ENCODE measurements at regions of chr15 and their contacts with region 1.

Region 1: DNA sequence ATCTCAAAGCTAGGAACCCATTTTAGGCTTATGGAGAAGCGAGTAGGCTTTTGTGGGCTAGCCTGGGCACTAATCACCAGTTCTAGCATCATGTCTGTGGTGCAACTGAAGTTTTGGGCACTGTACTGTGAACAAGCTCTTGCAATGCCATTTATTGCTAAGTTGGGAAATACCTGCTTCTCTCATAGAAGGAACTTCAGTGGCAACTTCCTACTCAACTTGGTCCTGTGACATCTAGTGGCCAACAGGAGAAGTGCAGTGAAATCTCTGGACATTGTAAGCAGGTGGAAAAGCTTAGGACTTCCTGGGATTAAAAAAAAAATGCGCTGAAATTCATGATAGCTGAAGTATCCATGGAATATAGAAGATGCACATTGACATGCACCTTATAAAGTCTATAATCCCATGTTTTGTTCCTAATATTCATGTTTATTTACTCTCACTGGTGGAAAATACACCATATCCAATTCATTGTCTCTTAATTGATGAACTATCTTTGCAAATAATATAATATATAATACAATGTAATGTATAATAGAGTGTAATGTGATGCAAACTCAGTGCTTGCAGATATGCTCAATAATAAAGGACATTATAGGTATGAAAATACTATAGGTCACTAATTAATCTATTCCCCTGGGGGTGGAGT is 6.5 kb upstream of the ALDH1A3 start:
- DNase-seq: no peak
- ATAC-seq: peak; percentile 71 to 94 (median 83)
- H3K4me3 ChIP-seq: no peak overlapping the region
- H3K27ac ChIP-seq: no peak overlapping the region
- H3K4me1 ChIP-seq: no peaks in the 10 kb centered on the region
- H3K27me3 ChIP-seq: peaks cover 0 to 2% (median 0%) of the 10 kb centered on the region in 3 donors
- CTCF ChIP-seq: peak; percentile 88

Region 2: GRCh38 chr15:100627789-100628395 is 245.3 kb before region 1 on chr15:
- intact Hi-C with region 1: loop called (anchors 1 to 2 kb)
- DNase-seq: peak in 1 of 2 donors; percentile 20
- ATAC-seq: peak; percentile 83 to 91 (median 88)
- H3K4me3 ChIP-seq: no peak overlapping the region
- H3K27ac ChIP-seq: no peak overlapping the region
- H3K4me1 ChIP-seq: peaks cover 11% of the 10 kb centered on the region
- H3K27me3 ChIP-seq: no peaks in the 10 kb centered on the region
- CTCF ChIP-seq: peak; percentile 92

Region 3: DNA sequence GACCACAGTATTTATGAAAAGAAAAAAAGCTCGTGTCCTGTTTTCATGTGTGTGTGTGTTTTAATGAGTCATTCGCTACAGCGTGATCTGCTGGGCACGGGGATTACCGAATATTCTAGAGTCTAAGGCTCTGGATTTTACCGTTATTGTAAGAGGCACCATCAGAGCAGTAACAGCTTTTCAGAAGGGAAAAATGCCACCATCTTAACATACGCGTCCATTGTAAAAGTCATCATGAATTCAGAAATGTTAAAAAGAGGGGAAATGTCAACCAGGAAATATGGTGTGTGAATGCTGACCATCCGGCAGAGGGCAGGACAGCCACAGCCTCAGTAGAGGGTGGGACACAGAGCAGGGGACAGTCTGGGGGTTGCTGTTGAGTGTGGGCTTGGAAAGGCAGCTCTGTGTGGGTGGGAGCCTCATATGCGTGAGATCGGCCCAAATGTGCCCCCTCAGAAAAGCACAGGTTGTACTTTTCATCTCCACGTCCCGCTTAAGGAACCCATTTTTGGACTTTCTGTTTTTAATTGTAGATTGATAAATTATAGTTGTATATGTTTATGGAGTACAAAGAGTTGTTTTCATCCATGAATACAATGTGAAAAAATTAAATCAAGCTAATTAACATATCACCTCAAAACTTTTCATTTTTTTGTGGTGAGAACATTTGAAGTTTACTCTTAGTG is 201.2 kb before region 1 on chr15:
- intact Hi-C with region 1: loop called in 1 of 2 experiments (anchors 2 kb)
- DNase-seq: no peak
- ATAC-seq: peak; percentile 60 to 79 (median 64)
- H3K4me3 ChIP-seq: peak overlapping the region; percentile 13
- H3K27ac ChIP-seq: no peak overlapping the region
- H3K4me1 ChIP-seq: no peaks in the 10 kb centered on the region
- H3K27me3 ChIP-seq: peaks cover 0 to 3% (median 0%) of the 10 kb centered on the region in 3 donors
- CTCF ChIP-seq: peak; percentile 51

Measured in psoas muscle (tissue), 8 donors.